Ovary (tissue), 10 donors: ENCODE measurements at regions of chr1 and their contacts with region 1.

Region 1: DNA sequence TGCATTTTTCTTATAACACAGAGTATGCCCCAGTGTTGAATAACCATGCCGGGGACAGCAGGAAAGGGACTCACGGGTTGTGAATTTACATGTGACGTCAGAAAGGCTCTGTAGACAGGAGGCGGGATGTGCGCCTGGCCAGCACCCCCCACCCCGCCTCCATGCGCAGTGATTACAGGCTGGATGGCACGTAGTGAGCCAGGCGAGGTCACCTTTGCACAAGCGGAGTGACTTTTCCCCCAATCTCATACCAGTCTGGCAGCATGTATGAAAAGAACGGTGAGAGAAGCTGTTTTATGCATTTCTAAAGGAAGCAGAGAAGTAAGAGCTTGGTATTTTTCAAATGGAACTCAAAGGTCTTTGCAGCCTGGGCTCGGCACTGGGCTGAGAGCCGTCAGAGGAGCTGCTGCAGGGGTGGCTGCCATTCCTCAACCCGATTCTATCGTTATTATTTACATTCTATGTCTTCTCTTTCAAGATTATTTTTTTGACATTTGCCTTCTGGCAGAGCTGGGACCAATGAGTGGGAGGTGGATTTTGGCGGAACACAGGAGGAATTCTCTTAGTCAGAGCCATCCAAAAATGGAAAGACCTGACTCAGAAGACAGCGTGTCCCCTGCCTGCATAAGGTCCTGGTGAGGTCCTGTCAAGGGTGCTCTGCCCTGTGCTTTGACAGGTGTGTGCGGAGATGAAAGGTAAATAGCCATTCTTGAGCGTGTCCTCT is 115.6 kb upstream of the SLC45A1 start:
- DNase-seq: peak; percentile 76 to 86 (median 85)
- H3K4me3 ChIP-seq: no peak overlapping the region
- H3K27ac ChIP-seq: peak overlapping the region; percentile 96 to 98
- H3K4me1 ChIP-seq: peaks cover 27% of the 10 kb centered on the region
- H3K27me3 ChIP-seq: no peaks in the 10 kb centered on the region
- CTCF ChIP-seq: no peak
- EP300 ChIP-seq: peak; percentile 67
- POLR2A ChIP-seq: no peak

Region 2: DNA sequence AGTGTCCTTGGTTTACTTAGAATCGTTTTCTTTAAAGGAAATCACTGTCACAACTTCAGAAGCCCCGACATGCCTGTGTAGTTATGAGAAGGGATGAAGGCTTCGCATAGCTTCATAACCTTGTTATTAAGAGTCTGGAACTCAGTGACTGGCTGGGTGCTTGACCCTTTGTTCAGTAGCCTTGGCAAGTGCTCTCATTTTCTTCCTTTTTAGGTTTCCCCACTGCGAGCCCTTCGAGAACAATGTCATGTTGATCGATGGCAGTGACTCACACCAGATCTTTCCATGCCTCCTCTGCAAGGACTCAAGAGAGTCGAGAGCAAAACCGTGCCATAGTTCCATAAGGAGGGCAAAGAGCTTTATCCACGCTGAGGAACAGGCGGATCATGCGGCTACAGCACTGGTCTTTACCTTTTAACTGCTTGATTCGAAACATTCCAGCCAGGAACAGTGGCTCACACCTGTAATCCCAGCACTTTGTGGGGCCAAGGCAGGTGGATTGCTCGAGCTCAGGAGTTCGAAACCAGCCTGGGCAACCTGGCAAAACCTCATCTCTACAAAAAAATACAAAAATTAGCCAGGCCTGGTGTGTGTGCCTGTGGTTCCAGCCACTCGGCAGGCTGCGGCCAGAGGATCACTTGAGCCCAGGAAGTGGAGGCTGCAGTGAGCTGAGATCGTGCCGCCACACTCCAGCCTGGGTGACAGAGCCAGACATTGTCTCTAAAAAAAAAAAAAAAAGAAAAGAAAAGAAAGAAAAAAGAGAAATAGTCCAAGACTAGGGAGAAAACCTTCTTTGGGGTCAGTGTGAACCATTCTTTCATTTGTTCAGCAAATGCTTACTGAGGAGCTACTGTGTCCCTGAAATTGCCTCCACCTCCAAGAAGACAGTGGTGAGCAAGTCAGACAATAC is 80.8 kb before region 1 on chr1:
- intact Hi-C with region 1: loop called in 1 of 4 experiments (anchors 5 kb)
- DNase-seq: peak; percentile 68 to 88 (median 71)
- H3K4me3 ChIP-seq: no peak overlapping the region
- H3K27ac ChIP-seq: peak overlapping the region; percentile 44 to 79
- H3K4me1 ChIP-seq: peaks cover 20% of the 10 kb centered on the region
- H3K27me3 ChIP-seq: no peaks in the 10 kb centered on the region
- CTCF ChIP-seq: no peak
- EP300 ChIP-seq: no peak
- POLR2A ChIP-seq: peak; percentile 21

Region 3: DNA sequence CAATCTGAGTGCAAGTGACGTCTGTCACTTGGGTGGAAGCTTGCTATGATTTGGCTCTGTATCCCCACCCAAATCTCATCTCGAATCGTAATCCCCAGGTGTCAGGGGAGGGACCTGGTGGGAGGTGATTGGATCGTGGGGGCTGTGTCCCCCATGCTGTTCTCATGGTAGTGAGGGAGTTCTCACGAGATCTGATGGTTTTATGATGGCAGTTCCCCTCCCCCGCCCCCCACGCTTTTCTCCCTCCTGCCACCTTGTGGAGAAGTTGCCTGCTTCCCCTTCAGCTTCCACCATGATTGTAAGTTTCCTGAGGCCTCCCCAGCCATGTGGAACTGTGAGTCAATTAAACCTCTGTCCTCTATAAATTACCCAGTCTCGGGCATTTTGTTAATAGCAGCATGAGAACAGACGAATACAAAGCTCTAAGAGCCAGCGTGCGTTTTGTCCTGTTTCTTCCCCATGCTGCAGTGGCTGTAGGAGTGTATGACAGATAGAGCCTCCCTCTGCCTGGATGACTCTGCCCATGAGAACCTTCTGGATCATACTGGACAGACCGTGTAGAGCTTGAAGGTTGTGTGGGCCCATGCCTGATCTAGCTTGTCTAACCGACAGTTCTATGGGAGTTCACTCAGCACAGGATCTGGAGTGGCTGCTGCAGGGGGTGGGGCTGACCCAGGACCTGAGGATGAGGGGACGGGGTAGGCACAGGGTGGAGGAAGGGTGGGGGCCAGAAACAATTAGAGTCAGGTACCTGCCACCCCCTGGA is 36.6 kb before region 1 on chr1:
- intact Hi-C with region 1: no loop called
- DNase-seq: no peak
- H3K4me3 ChIP-seq: no peak overlapping the region
- H3K27ac ChIP-seq: no peak overlapping the region
- H3K4me1 ChIP-seq: peaks cover 10% of the 10 kb centered on the region
- H3K27me3 ChIP-seq: no peaks in the 10 kb centered on the region
- CTCF ChIP-seq: no peak
- EP300 ChIP-seq: no peak
- POLR2A ChIP-seq: no peak